ENCODE measurements at regions of chr5 and their contacts with region 1.

Region 1: DNA sequence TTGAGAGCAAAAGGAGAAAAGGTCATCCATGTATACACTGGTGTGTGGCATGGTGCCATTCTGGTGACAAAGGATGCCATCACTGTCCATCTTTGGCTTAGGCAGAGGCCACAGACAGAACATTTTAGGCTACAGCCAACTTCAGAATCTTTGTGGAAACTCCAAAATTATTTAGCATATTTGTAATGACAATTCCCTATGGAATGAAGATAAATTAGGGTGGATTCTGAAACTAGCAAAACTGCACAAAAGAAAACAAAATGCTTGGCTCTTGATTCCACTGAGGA is 92.5 kb downstream of the FBXW11 start:
- DNase-seq: no peak
- ATAC-seq: no peak
- H3K4me3 ChIP-seq: no peak overlapping the region
- H3K27ac ChIP-seq: no peak overlapping the region
- H3K4me1 ChIP-seq: peaks cover 16% of the 10 kb centered on the region
- CTCF ChIP-seq: no peak
- EP300 ChIP-seq: no peak
- POLR2A ChIP-seq: no peak
- RAD21 ChIP-seq: no peak

Region 2: GRCh38 chr5:171882118-171882517 is 31.8 kb before region 1 on chr5:
- CTCF ChIA-PET with region 1: interaction called, 13 read pairs
- POLR2A ChIA-PET with region 1: no interaction called
- DNase-seq: no peak
- ATAC-seq: no peak
- H3K4me3 ChIP-seq: no peak overlapping the region
- H3K27ac ChIP-seq: no peak overlapping the region
- H3K4me1 ChIP-seq: no peaks in the 10 kb centered on the region
- CTCF ChIP-seq: no peak
- EP300 ChIP-seq: no peak
- POLR2A ChIP-seq: no peak
- RAD21 ChIP-seq: no peak

Region 3: GRCh38 chr5:172006321-172007174 is 92.6 kb after region 1 on chr5 and contains the start of gene FBXW11:
- CTCF ChIA-PET with region 1: interaction called, 30 read pairs
- POLR2A ChIA-PET with region 1: interaction called, 12 read pairs
- DNase-seq: peak; percentile 97
- ATAC-seq: peak; percentile 93 to 94
- H3K4me3 ChIP-seq: peak within 1 kb of the TSS; percentile 93
- H3K27ac ChIP-seq: peak within 1 kb of the TSS; percentile 94 to 98
- H3K4me1 ChIP-seq: peaks cover 30% of the 10 kb centered on the region
- CTCF ChIP-seq: no peak
- EP300 ChIP-seq: no peak
- POLR2A ChIP-seq: peak; percentile 99
- RAD21 ChIP-seq: no peak; a peak in 1 of 5 replicates
- polyA plus RNA-seq, gene FBXW11: 80.2 and 87.4 TPM in 2 replicates

Region 4: GRCh38 chr5:172052450-172053236 is 138.7 kb after region 1 on chr5:
- CTCF ChIA-PET with region 1: interaction called, 38 read pairs
- POLR2A ChIA-PET with region 1: no interaction called
- DNase-seq: no peak
- ATAC-seq: peak in 1 of 2 experiments; percentile 48; a peak in 3 of 6 replicates
- H3K4me3 ChIP-seq: no peak overlapping the region
- H3K27ac ChIP-seq: no peak overlapping the region
- H3K4me1 ChIP-seq: no peaks in the 10 kb centered on the region
- CTCF ChIP-seq: no peak
- EP300 ChIP-seq: no peak
- POLR2A ChIP-seq: no peak
- RAD21 ChIP-seq: no peak

Region 5: GRCh38 chr5:172283020-172283861 is 369.3 kb after region 1 on chr5 and contains the start of gene UBTD2:
- CTCF ChIA-PET with region 1: interaction called, 12 read pairs
- POLR2A ChIA-PET with region 1: interaction called, 4 read pairs
- DNase-seq: peak; percentile 81 to 87
- ATAC-seq: peak; percentile 81 to 90
- H3K4me3 ChIP-seq: peak within 1 kb of the TSS; percentile 57
- H3K27ac ChIP-seq: peak within 1 kb of the TSS; percentile 95 to 98
- H3K4me1 ChIP-seq: peaks cover 24% of the 10 kb centered on the region
- CTCF ChIP-seq: peak; percentile 68
- EP300 ChIP-seq: no peak
- POLR2A ChIP-seq: no peak; the same call in 1 of the 2 replicates
- RAD21 ChIP-seq: peak; percentile 29 to 74; a peak in 4 of 5 replicates
- polyA plus RNA-seq, gene UBTD2: 20.9 and 22.8 TPM in 2 replicates